ENCODE measurements at regions of chr3 and their contacts with region 1.

Region 1: GRCh38 chr3:51391075-51391567 is at the start of gene RBM15B:
- DNase-seq: peak; percentile 94 to 98 (median 97)
- ATAC-seq: peak; percentile 86
- H3K4me3 ChIP-seq: peak within 1 kb of the TSS; percentile 63
- H3K4me3 Mint-ChIP-seq: peak within 1 kb of the TSS; percentile 86
- H3K27ac ChIP-seq: peak within 1 kb of the TSS; percentile 70 to 88
- H3K27ac Mint-ChIP-seq: peak within 1 kb of the TSS; percentile 91
- H3K4me1 ChIP-seq: peaks cover 90% of the 10 kb centered on the region
- H3K4me1 Mint-ChIP-seq: peaks cover 69% of the 10 kb centered on the region
- H3K27me3 ChIP-seq: no peaks in the 10 kb centered on the region
- H3K27me3 Mint-ChIP-seq: no peaks in the 10 kb centered on the region
- CTCF ChIP-seq: peak; percentile 10
- total RNA-seq, gene RBM15B: 29.1 to 29.2 TPM

Region 2: GRCh38 chr3:51434746-51435327 is 43.7 kb after region 1 on chr3:
- CTCF ChIA-PET with region 1: interaction called, 17 read pairs
- POLR2A ChIA-PET with region 1: interaction called, 5 read pairs
- intact Hi-C with region 1: loop called (anchors 1 to 2 kb)
- DNase-seq: peak in 13 of 14 experiments; percentile 13 to 77 (median 30)
- ATAC-seq: peak; percentile 94
- H3K4me3 ChIP-seq: no peak overlapping the region
- H3K4me3 Mint-ChIP-seq: no peak overlapping the region
- H3K27ac ChIP-seq: no peak overlapping the region
- H3K27ac Mint-ChIP-seq: no peak overlapping the region
- H3K4me1 ChIP-seq: no peaks in the 10 kb centered on the region
- H3K4me1 Mint-ChIP-seq: peaks cover 8% of the 10 kb centered on the region
- H3K27me3 ChIP-seq: no peaks in the 10 kb centered on the region
- H3K27me3 Mint-ChIP-seq: no peaks in the 10 kb centered on the region
- CTCF ChIP-seq: peak; percentile 83

Region 3: DNA sequence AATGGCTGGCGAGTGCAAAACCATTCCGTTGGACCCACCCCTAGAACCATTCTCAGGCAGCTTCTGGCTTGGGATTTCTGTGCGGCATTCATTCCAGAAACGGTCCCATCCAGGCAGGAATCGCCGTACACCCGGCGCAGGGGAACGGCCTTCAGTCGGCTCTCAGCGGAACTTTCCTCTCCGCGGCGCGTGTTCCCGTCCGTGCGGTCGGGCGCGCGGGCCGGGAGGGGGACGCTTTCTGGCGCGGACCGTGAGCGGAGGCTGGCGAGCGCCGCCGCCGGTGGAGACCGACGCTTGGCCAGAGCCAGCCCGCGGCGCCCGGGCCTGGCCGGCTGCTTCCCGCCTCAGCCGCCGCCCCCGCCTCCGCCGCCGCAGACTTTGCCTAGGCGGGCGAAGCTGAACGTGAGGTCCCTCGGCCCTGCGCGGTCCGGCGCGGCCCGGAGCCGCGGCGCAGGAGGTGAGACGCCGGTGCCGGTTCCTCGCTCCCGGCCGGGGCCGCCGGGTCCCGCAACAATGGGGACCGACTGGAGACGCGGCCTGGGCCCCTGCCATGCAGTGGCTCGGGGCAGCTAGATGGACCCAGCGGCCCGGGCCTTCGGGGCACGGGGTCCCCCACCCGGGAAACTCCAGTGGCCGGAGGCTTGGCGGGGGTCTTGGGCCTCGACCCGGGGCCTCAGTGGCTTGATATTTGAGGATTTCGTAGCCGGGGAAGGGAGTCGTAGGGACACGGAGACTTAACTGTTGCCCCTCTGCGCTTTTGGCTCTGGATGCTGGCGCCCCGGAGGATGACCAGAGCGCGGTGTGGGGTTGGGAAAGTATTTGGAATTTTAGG is 147.6 kb after region 1 on chr3 and contains the start of gene RAD54L2:
- CTCF ChIA-PET with region 1: no interaction called
- POLR2A ChIA-PET with region 1: no interaction called
- intact Hi-C with region 1: loop called in 1 of 2 experiments (anchors 5 kb)
- DNase-seq: peak; percentile 44 to 90 (median 72)
- ATAC-seq: peak; percentile 91
- H3K4me3 ChIP-seq: peak within 1 kb of the TSS; percentile 87
- H3K4me3 Mint-ChIP-seq: peak within 1 kb of the TSS; percentile 98
- H3K27ac ChIP-seq: peak within 1 kb of the TSS; percentile 34 to 65
- H3K27ac Mint-ChIP-seq: peak within 1 kb of the TSS; percentile 89
- H3K4me1 ChIP-seq: peaks cover 27% of the 10 kb centered on the region
- H3K4me1 Mint-ChIP-seq: peaks cover 45% of the 10 kb centered on the region
- H3K27me3 ChIP-seq: no peaks in the 10 kb centered on the region
- H3K27me3 Mint-ChIP-seq: no peaks in the 10 kb centered on the region
- CTCF ChIP-seq: no peak
- total RNA-seq, gene RAD54L2: 39.9 to 41.7 TPM

Region 4: GRCh38 chr3:51799879-51800749 is 409.0 kb after region 1 on chr3:
- CTCF ChIA-PET with region 1: interaction called, 3 read pairs
- POLR2A ChIA-PET with region 1: no interaction called
- intact Hi-C with region 1: loop called in 1 of 2 experiments (anchors 2 kb)
- DNase-seq: peak in 5 of 14 experiments; percentile 9 to 69 (median 67)
- ATAC-seq: peak; percentile 54
- H3K4me3 ChIP-seq: no peak overlapping the region
- H3K4me3 Mint-ChIP-seq: no peak overlapping the region
- H3K27ac ChIP-seq: no peak overlapping the region
- H3K27ac Mint-ChIP-seq: no peak overlapping the region
- H3K4me1 ChIP-seq: peaks cover 2% of the 10 kb centered on the region
- H3K4me1 Mint-ChIP-seq: peaks cover 10% of the 10 kb centered on the region
- H3K27me3 ChIP-seq: no peaks in the 10 kb centered on the region
- H3K27me3 Mint-ChIP-seq: peaks cover 11% of the 10 kb centered on the region
- CTCF ChIP-seq: peak; percentile 77

Region 5: DNA sequence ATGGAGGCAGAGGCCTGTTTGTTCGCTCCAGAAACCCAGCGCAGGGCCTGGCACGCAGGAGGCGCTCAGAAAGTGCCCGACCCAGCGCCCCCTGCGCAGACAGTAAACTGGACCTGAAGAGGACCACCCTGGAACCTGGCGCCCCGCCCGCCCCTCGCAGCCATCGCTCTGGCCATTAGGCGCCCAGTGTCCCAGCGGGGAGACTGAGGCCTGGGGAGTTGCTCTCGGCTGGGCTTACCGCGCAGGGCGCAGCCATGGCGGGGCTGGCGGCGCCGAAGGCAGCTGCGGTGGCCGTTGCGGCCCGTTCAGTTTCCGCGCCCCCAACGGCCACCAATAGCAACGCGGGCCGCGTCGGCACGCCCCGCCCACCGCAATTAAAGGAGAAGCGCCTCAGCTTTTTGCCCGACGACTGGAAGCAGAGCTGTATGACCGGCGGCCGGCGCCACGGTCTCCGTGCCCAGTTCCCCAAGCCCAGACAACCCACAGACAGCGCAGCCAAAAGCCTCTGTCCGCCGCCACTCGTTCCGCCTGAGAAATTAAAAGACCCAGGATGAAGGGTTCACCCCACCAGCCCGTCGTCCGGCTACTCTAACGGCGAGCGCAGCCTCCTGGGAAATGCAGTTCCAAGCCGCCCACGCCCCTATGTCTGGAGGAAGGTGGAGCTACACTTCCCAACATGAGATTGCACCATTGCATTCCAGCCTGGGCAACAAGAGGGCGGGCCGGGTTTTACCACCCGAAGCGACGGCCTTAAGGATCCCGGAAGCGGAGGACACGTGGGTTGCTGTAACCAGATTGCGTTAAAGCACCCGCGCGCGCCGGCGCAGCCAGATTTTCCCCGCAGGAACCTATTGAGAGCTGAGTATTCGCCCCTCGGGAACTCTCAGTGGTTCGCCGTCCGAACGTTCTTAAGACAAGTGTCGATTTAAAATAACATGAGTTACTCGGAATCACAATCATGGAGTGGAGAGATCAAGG is 763.3 kb after region 1 on chr3 and contains the start of gene POC1A:
- CTCF ChIA-PET with region 1: no interaction called
- POLR2A ChIA-PET with region 1: no interaction called
- intact Hi-C with region 1: loop called in 1 of 2 experiments (anchors 10 kb)
- DNase-seq: peak; percentile 66 to 94 (median 78)
- ATAC-seq: peak; percentile 87
- H3K4me3 ChIP-seq: peak within 1 kb of the TSS; percentile 87
- H3K4me3 Mint-ChIP-seq: peak within 1 kb of the TSS; percentile 99
- H3K27ac ChIP-seq: peak within 1 kb of the TSS; percentile 73 to 74
- H3K27ac Mint-ChIP-seq: peak within 1 kb of the TSS; percentile 96
- H3K4me1 ChIP-seq: peaks cover 17% of the 10 kb centered on the region
- H3K4me1 Mint-ChIP-seq: peaks cover 12% of the 10 kb centered on the region
- H3K27me3 ChIP-seq: no peaks in the 10 kb centered on the region
- H3K27me3 Mint-ChIP-seq: no peaks in the 10 kb centered on the region
- CTCF ChIP-seq: peak; percentile 9
- total RNA-seq, gene POC1A: 0.22 to 0.39 TPM